GM12878 (cell line): ENCODE measurements at regions of chr9 and their contacts with region 1.

Region 1: DNA sequence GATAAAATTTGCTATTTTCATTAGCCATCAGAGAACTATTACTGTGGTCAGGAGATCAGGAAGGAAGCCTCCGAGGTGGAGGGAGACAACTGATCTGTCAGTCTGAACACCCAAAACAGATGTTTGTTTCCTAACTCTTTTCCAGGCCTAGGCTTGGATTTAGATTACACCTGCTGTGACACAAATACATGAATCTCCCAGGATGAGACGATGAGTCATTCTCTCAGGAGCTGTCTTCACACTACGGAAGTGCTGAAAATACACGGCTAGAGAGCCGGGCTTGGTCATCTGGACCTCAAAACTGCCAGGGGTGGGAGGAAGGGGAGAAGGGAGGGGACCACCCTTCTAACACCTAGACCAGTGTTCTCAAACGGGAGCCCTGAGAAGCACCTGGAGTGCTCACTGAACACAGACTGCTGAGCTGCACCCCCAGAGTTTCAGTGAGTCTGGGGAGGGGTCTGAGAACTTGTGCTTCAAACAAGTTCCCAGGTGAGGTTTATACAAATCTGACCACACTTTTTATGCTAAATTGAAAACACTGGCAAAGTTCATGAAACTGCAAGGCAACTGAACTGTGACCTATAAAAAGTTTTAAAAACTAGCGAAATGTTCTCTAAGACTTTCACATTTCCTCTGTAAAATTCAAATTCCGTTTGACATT is 80.3 kb upstream of the EQTN start:
- DNase-seq: no peak
- ATAC-seq: peak; percentile 32
- H3K4me3 ChIP-seq: peak overlapping the region; percentile 55
- H3K27ac ChIP-seq: peak overlapping the region; percentile 87
- H3K4me1 ChIP-seq: peaks cover 33% of the 10 kb centered on the region
- H3K27me3 ChIP-seq: no peaks in the 10 kb centered on the region
- CTCF ChIP-seq: no peak
- EP300 ChIP-seq: 0 out of 4 replicates have a peak, but pooled peaks of 1 of the 2 experiments have one; percentile 8
- POLR2A ChIP-seq: no peak
- RAD21 ChIP-seq: no peak

Region 2: DNA sequence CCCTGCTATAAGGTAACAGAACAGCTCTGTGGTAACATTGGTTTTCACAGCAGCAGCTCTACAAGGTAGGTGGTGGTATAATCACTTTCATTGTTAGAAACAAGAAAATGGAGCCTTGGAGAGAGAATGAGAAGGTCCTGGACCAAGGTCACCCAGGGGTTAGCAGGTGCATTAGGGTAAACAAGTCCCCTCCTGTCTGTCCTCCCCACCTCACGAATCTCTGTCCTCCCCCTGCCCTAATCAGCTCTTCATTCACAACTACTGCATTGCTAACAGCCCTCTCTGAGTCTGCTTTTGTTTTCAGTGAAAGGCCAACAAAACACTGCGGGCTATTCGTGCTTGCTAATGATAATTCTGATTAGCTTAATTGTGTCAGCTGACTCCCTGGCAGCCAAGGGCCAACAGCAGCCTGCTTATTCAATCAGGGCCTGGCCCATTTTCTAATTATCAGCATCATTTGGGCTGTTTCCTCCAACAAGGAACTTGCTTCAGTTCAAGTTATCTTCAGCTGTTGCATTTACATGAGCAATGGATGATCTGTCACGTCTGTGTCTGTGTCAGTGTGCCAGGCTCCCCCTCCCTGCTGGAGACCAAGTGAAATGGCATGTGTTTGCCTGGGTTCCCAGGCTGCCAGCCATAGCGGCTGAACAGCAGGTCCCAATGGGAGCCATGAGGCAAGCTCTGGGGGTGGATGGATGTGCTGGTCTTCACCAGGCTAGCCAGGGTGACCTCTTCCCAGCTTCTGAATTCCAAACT is 23.6 kb before region 1 on chr9:
- CTCF ChIA-PET with region 1: interaction called, 7 read pairs
- POLR2A ChIA-PET with region 1: interaction called, 3 read pairs
- RAD21 ChIA-PET with region 1: interaction called, 6 read pairs
- SMC1A ChIA-PET with region 1: interaction called, 11 read pairs
- in situ Hi-C with region 1: no loop called
- intact Hi-C with region 1: loop called (anchors 1 kb)
- DNase-seq: peak; percentile 46
- ATAC-seq: peak; percentile 88
- H3K4me3 ChIP-seq: no peak overlapping the region
- H3K27ac ChIP-seq: 0 out of 2 replicates have a peak overlapping the region, but pooled peaks have one; percentile 7
- H3K4me1 ChIP-seq: peaks cover 30% of the 10 kb centered on the region
- H3K27me3 ChIP-seq: no peaks in the 10 kb centered on the region
- CTCF ChIP-seq: no peak
- EP300 ChIP-seq: no peak
- POLR2A ChIP-seq: no peak
- RAD21 ChIP-seq: no peak

Region 3: GRCh38 chr9:27365707-27366376 is 11.4 kb before region 1 on chr9:
- CTCF ChIA-PET with region 1: interaction called, 23 read pairs
- POLR2A ChIA-PET with region 1: interaction called, 25 read pairs
- RAD21 ChIA-PET with region 1: interaction called, 35 read pairs
- SMC1A ChIA-PET with region 1: interaction called, 64 read pairs
- in situ Hi-C with region 1: no loop called
- intact Hi-C with region 1: loop called (anchors 1 kb)
- DNase-seq: peak; percentile 74
- ATAC-seq: peak; percentile 91
- H3K4me3 ChIP-seq: peak overlapping the region; percentile 51; the same call in 1 of the 2 replicates
- H3K27ac ChIP-seq: peak overlapping the region; percentile 71
- H3K4me1 ChIP-seq: peaks cover 40% of the 10 kb centered on the region
- H3K27me3 ChIP-seq: no peaks in the 10 kb centered on the region; a peak in 1 of 4 replicates
- CTCF ChIP-seq: no peak
- EP300 ChIP-seq: 0 out of 4 replicates have a peak, but pooled peaks of 1 of the 2 experiments have one; percentile 10
- POLR2A ChIP-seq: no peak
- RAD21 ChIP-seq: no peak

Region 4: DNA sequence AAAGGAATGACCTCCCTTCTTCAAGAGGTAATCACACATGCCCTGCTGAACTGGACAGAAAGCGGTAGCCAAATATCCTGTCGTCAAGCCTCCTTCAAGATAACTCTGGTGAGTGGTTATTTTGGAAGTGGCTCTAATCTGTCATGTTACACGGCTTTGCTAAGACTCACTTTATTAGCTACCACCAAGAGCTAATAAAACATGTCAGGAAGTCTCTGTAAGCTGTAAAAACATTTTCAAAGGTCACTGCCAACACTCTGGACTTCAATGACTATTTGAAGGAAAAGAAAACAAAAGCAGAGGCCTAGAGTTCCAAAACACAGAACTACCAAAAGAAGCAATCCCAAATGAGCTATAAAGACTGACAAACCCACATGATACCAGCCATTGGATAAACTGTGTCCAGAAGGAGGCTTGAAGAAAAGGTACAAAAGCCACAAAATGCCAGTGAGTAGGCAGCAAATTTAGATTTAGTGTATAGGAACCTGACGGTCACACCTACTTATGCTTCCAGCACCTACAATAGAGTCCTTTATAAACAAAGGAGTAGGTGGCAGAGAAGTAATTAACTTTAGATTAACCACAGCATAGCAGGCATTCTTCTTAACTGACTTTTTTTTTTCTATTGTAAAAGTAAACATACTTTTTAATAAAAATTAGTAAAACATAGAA is 17.0 kb after region 1 on chr9:
- CTCF ChIA-PET with region 1: interaction called, 12 read pairs
- POLR2A ChIA-PET with region 1: interaction called, 3 read pairs
- RAD21 ChIA-PET with region 1: no interaction called
- SMC1A ChIA-PET with region 1: interaction called, 11 read pairs
- in situ Hi-C with region 1: no loop called
- intact Hi-C with region 1: loop called (anchors 2 kb)
- DNase-seq: no peak
- ATAC-seq: no peak
- H3K4me3 ChIP-seq: no peak overlapping the region
- H3K27ac ChIP-seq: no peak overlapping the region
- H3K4me1 ChIP-seq: no peaks in the 10 kb centered on the region
- H3K27me3 ChIP-seq: no peaks in the 10 kb centered on the region
- CTCF ChIP-seq: no peak
- EP300 ChIP-seq: no peak
- POLR2A ChIP-seq: no peak
- RAD21 ChIP-seq: no peak

Region 5: DNA sequence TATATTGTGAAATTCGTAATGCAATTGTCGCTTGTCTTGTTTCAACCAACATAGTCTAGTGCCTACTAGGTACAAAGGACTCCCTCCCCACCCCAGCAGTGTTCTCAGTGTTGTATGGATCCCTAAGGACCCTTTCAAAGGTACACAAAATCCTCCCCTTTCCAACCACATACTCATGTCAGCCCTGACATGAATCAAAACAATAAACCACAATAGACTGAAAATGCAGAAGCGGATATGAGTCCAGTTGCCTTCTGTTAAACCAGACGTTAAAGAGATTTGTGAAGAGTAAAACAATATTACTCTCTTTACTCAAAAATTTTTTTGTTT is 64.4 kb after region 1 on chr9:
- CTCF ChIA-PET with region 1: interaction called, 3 read pairs
- POLR2A ChIA-PET with region 1: no interaction called
- RAD21 ChIA-PET with region 1: no interaction called
- SMC1A ChIA-PET with region 1: no interaction called
- in situ Hi-C with region 1: no loop called
- intact Hi-C with region 1: loop called (anchors 2 kb)
- DNase-seq: peak; percentile 48
- ATAC-seq: peak; percentile 99
- H3K4me3 ChIP-seq: no peak overlapping the region
- H3K27ac ChIP-seq: no peak overlapping the region
- H3K4me1 ChIP-seq: peaks cover 9% of the 10 kb centered on the region
- H3K27me3 ChIP-seq: no peaks in the 10 kb centered on the region
- CTCF ChIP-seq: no peak
- EP300 ChIP-seq: peak; percentile 45 to 47; a peak in 2 of 4 replicates
- POLR2A ChIP-seq: no peak
- RAD21 ChIP-seq: no peak

Region 6: DNA sequence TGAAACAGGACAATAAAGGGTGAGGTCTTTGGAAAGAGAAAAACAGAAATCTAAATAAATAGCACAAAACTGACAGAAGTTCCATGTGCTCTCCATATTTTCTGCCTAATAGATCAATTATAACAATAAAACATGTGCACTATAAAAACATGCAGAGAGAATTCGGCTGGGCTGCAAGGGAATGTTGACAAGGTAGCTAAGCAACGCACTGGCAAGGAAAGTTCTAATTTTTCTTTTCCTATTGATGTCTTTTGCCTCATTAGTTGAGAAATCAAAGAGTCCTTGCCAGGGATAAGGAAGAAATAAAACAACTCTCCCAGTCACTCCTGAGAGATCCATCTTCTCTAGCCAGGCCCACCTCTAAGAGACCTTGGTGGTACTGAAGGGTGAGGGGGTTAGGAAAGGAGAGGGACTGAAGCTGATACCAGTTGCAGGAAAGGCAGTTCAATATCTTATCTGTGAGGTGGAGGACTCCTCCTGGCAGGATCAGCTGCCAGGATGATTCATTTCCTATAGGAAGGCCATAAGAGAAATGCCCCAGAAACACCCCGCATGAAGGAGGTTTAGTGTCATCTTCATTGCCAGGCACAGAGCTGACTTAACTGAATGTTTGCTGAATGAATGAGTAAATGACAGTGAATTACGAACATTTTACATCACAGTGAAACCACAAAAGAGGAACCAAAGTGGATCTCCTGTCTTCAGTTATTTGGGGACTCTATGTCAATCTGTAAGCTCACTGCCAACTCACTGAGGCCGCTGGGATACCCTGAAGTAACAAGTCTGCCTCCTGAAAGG is 83.1 kb after region 1 on chr9:
- CTCF ChIA-PET with region 1: interaction called, 4 read pairs
- POLR2A ChIA-PET with region 1: no interaction called
- RAD21 ChIA-PET with region 1: interaction called, 3 read pairs
- SMC1A ChIA-PET with region 1: interaction called, 10 read pairs
- in situ Hi-C with region 1: no loop called
- intact Hi-C with region 1: no loop called
- DNase-seq: peak; percentile 37
- ATAC-seq: peak; percentile 96
- H3K4me3 ChIP-seq: no peak overlapping the region
- H3K27ac ChIP-seq: no peak overlapping the region
- H3K4me1 ChIP-seq: peaks cover 12% of the 10 kb centered on the region; the same call in 1 of the 2 replicates
- H3K27me3 ChIP-seq: no peaks in the 10 kb centered on the region
- CTCF ChIP-seq: no peak
- EP300 ChIP-seq: no peak
- POLR2A ChIP-seq: no peak
- RAD21 ChIP-seq: no peak

Region 7: GRCh38 chr9:27489087-27489876 is 112.0 kb after region 1 on chr9:
- CTCF ChIA-PET with region 1: interaction called, 5 read pairs
- POLR2A ChIA-PET with region 1: interaction called, 5 read pairs
- RAD21 ChIA-PET with region 1: interaction called, 4 read pairs
- SMC1A ChIA-PET with region 1: interaction called, 8 read pairs
- in situ Hi-C with region 1: no loop called
- intact Hi-C with region 1: loop called (anchors 2 kb)
- DNase-seq: peak; percentile 50
- ATAC-seq: peak; percentile 88
- H3K4me3 ChIP-seq: peak overlapping the region; percentile 47; the same call in 1 of the 2 replicates
- H3K27ac ChIP-seq: peak overlapping the region; percentile 52; the same call in 1 of the 2 replicates
- H3K4me1 ChIP-seq: peaks cover 41% of the 10 kb centered on the region
- H3K27me3 ChIP-seq: no peaks in the 10 kb centered on the region
- CTCF ChIP-seq: no peak
- EP300 ChIP-seq: no peak
- POLR2A ChIP-seq: no peak
- RAD21 ChIP-seq: 0 out of 2 replicates have a peak, but pooled peaks have one; percentile 4